ENCODE measurements at regions of chr19 and their contacts with region 1.

Region 1: DNA sequence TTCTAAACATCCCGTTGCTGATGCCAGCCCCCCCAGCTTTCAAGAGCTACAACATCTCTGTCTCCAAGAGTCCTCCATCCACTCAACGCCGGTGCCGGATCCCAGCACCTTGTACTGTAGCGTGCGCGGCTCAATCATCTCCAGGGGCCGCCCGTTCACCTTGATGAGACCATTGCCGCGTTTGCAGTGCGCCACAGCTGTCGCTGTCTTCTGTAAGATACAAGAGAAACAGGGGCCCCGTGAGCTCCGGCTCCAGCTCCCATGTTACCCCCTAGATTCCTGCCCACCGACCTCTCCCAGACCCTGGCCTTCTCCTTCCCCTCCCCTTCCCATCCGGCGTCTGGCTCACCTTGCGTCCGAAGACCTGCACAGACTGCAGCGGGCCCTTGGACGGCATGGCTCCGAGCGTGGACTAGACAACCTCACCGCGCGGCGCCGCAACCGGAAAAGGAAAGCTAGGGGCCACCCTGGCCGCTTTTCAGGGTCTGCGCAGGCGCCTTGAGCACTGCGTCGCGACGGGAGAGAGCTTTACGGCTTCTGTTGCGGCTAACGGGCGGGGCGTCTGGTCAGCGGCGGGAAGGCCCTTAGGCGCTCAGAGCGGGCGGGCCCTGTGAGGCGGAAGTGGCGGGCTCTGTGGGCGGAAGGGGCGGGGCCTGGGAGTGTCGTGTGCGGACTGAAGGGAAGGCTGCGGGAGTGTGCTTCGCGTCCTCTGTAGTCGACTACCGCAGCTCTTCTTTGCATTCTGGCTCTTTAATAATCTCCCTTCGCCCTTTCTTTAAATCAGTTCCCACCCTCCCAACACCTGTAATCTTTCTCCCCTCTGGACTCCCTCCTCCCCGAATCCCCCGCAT is at the start of gene RPS16:
- DNase-seq: peak; percentile 88
- ATAC-seq: peak; percentile 88
- H3K4me3 ChIP-seq: peak within 1 kb of the TSS; percentile 97
- H3K27ac ChIP-seq: peak within 1 kb of the TSS; percentile 91
- H3K4me1 ChIP-seq: peaks cover 37% of the 10 kb centered on the region
- H3K27me3 ChIP-seq: no peaks in the 10 kb centered on the region
- CTCF ChIP-seq: no peak
- EP300 ChIP-seq: no peak
- POLR2A ChIP-seq: peak; percentile 100
- RAD21 ChIP-seq: no peak
- polyA plus RNA-seq, gene RPS16: 3,810 to 4,177 TPM

Region 2: GRCh38 chr19:39390755-39391592 is 44.8 kb before region 1 on chr19 and contains the starts of genes MED29 and PAF1:
- CTCF ChIA-PET with region 1: no interaction called
- POLR2A ChIA-PET with region 1: interaction called, 14 read pairs
- RAD21 ChIA-PET with region 1: interaction called, 5 read pairs
- SMC1A ChIA-PET with region 1: interaction called, 8 read pairs
- in situ Hi-C with region 1: no loop called
- intact Hi-C with region 1: no loop called
- DNase-seq: peak; percentile 100
- ATAC-seq: peak; percentile 99
- H3K4me3 ChIP-seq: peak within 1 kb of the TSS; percentile 99
- H3K27ac ChIP-seq: peak within 1 kb of the TSS; percentile 96
- H3K4me1 ChIP-seq: peaks cover 10% of the 10 kb centered on the region
- H3K27me3 ChIP-seq: no peaks in the 10 kb centered on the region
- CTCF ChIP-seq: 0 out of 6 replicates have a peak, but pooled peaks of 1 of the 3 experiments have one; percentile 10
- EP300 ChIP-seq: no peak
- POLR2A ChIP-seq: peak; percentile 94
- RAD21 ChIP-seq: no peak
- polyA plus RNA-seq, gene MED29: 3.2 to 5.1 TPM
- polyA plus RNA-seq, gene PAF1: 1.7 to 3.7 TPM

Region 3: GRCh38 chr19:39397360-39398296 is 38.1 kb before region 1 on chr19:
- CTCF ChIA-PET with region 1: interaction called, 15 read pairs
- POLR2A ChIA-PET with region 1: interaction called, 13 read pairs
- RAD21 ChIA-PET with region 1: interaction called, 7 read pairs
- SMC1A ChIA-PET with region 1: interaction called, 8 read pairs
- in situ Hi-C with region 1: no loop called
- intact Hi-C with region 1: no loop called
- DNase-seq: no peak
- ATAC-seq: peak; percentile 78
- H3K4me3 ChIP-seq: peak overlapping the region; percentile 26
- H3K27ac ChIP-seq: peak overlapping the region; percentile 99
- H3K4me1 ChIP-seq: peaks cover 54% of the 10 kb centered on the region
- H3K27me3 ChIP-seq: no peaks in the 10 kb centered on the region
- CTCF ChIP-seq: peak; percentile 97 to 98 (median 98); a peak in 5 of 6 replicates
- EP300 ChIP-seq: peak in 1 of 2 experiments; percentile 4; a peak in 1 of 4 replicates
- POLR2A ChIP-seq: no peak; the same call in 1 of the 2 replicates
- RAD21 ChIP-seq: peak; percentile 94